A673 (cell line): ENCODE measurements at regions of chr12 and their contacts with region 1.

Region 1: DNA sequence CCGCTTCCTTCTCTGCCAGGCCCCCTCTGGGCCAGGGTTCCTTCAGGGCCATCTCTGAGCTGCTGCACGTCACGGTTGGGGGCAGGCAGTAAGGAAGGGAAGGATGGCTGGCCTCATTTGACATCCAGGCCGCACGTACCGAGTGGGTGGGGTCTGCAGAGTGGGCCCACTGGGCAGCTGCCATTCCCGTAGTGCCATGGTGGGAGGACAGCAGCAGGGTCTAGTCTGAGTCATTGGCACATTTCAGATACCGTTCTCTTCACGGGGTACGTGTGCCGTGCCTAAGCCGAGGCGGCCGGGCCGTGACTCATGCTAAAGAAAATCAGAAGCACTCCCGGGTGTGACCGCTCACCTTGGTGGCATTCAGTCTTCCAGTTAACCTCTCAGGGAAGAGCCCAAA is 43.9 kb downstream of the IL31 start:
- DNase-seq: no peak
- H3K4me3 ChIP-seq: no peak overlapping the region
- H3K27ac ChIP-seq: no peak overlapping the region
- H3K4me1 ChIP-seq: peaks cover 15% of the 10 kb centered on the region
- H3K27me3 ChIP-seq: no peaks in the 10 kb centered on the region
- CTCF ChIP-seq: no peak

Region 2: GRCh38 chr12:122190842-122191668 is 60.9 kb after region 1 on chr12:
- CTCF ChIA-PET with region 1: interaction called, 10 read pairs
- POLR2A ChIA-PET with region 1: no interaction called
- intact Hi-C with region 1: loop called (anchors 5 kb)
- DNase-seq: peak; percentile 73
- H3K4me3 ChIP-seq: no peak overlapping the region
- H3K27ac ChIP-seq: no peak overlapping the region
- H3K4me1 ChIP-seq: no peaks in the 10 kb centered on the region
- H3K27me3 ChIP-seq: no peaks in the 10 kb centered on the region
- CTCF ChIP-seq: peak; percentile 82

Region 3: GRCh38 chr12:122356192-122356635 is 226.1 kb after region 1 on chr12:
- CTCF ChIA-PET with region 1: no interaction called
- POLR2A ChIA-PET with region 1: no interaction called
- intact Hi-C with region 1: loop called (anchors 5 kb)
- DNase-seq: peak; percentile 78
- H3K4me3 ChIP-seq: no peak overlapping the region
- H3K27ac ChIP-seq: no peak overlapping the region
- H3K4me1 ChIP-seq: no peaks in the 10 kb centered on the region
- H3K27me3 ChIP-seq: no peaks in the 10 kb centered on the region
- CTCF ChIP-seq: peak; percentile 86